GM12878 (cell line): ENCODE measurements at regions of chr6 and their contacts with region 1.

Region 1: DNA sequence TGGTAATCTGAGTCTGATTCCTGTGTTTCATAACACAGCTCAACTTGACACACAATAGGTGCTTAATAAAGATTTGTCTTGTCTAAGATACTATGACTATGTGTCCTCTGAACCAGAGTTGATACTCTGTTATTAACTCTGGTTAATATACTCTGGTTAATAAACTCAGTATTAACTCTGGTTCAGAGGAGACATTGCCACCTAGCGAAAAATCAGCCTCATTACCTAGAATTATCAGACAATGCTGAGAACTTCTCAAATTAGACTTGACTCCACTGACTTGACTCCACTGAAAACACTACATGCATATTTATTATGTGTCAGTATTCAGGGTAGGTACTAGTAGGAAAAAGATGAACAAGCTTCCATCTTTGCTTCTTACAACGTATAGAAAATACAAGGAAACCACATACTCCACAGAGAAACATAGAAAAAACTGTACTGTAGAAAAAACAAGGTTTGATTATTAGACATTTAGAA is 73.9 kb downstream of the AHI1 start:
- DNase-seq: peak; percentile 16
- ATAC-seq: peak; percentile 97
- H3K4me3 ChIP-seq: no peak overlapping the region
- H3K27ac ChIP-seq: no peak overlapping the region
- H3K4me1 ChIP-seq: peaks cover 4% of the 10 kb centered on the region; the same call in 1 of the 2 replicates
- H3K27me3 ChIP-seq: no peaks in the 10 kb centered on the region
- CTCF ChIP-seq: peak; percentile 61 to 80 (median 68)
- EP300 ChIP-seq: no peak
- POLR2A ChIP-seq: no peak
- RAD21 ChIP-seq: peak; percentile 88

Region 2: DNA sequence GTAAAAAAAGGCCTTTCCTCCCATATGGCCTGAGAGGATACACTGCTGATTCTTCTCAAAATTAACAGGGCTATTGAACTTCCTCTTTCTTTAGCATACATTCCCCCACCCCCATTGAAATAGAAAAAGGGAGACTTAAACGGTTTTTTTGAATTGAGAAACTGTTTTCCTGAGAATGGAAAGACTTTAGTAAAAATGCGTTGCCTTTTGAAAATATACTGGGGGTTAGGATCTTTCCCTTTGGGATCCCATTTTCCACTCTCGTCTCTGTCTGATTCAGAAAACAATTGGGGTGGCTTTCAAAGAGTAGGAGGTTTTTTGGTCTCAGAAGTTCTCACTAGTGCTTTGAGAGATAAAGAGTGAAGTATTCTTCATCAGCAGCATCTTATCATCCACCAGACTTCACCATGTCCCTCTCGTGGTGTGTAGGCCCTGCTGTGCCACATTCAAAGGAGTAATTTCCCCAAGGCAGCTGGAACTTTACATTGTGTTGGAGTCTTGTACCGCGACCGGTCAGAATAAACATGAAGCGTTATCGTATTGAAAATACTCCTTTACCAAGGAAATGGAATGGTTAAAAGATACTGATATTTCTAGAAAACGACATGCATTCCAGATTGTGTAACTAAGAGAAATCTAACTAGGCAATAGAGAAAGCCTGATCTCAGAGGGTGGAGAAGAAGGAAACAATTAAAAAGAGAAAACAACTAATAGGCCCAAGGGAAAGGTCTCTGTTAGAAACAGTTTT is 232.0 kb before region 1 on chr6:
- CTCF ChIA-PET with region 1: interaction called, 16 read pairs
- POLR2A ChIA-PET with region 1: no interaction called
- RAD21 ChIA-PET with region 1: interaction called, 6 read pairs
- SMC1A ChIA-PET with region 1: interaction called, 10 read pairs
- in situ Hi-C with region 1: no loop called
- intact Hi-C with region 1: no loop called
- DNase-seq: no peak
- ATAC-seq: peak; percentile 78
- H3K4me3 ChIP-seq: no peak overlapping the region
- H3K27ac ChIP-seq: peak overlapping the region; percentile 56
- H3K4me1 ChIP-seq: peaks cover 9% of the 10 kb centered on the region; the same call in 1 of the 2 replicates
- H3K27me3 ChIP-seq: no peaks in the 10 kb centered on the region
- CTCF ChIP-seq: no peak
- EP300 ChIP-seq: no peak
- POLR2A ChIP-seq: no peak
- RAD21 ChIP-seq: no peak

Region 3: GRCh38 chr6:135226537-135226936 is 197.2 kb before region 1 on chr6:
- CTCF ChIA-PET with region 1: interaction called, 7 read pairs
- POLR2A ChIA-PET with region 1: no interaction called
- RAD21 ChIA-PET with region 1: no interaction called
- SMC1A ChIA-PET with region 1: interaction called, 3 read pairs
- in situ Hi-C with region 1: loop called (anchors 25 kb)
- intact Hi-C with region 1: loop called (anchors 5 kb)
- DNase-seq: peak; percentile 66
- ATAC-seq: peak; percentile 83
- H3K4me3 ChIP-seq: no peak overlapping the region
- H3K27ac ChIP-seq: no peak overlapping the region
- H3K4me1 ChIP-seq: peaks cover 26% of the 10 kb centered on the region
- H3K27me3 ChIP-seq: no peaks in the 10 kb centered on the region
- CTCF ChIP-seq: no peak
- EP300 ChIP-seq: peak; percentile 76 to 79; a peak in 3 of 4 replicates
- POLR2A ChIP-seq: no peak
- RAD21 ChIP-seq: 0 out of 2 replicates have a peak, but pooled peaks have one; percentile 4

Region 4: DNA sequence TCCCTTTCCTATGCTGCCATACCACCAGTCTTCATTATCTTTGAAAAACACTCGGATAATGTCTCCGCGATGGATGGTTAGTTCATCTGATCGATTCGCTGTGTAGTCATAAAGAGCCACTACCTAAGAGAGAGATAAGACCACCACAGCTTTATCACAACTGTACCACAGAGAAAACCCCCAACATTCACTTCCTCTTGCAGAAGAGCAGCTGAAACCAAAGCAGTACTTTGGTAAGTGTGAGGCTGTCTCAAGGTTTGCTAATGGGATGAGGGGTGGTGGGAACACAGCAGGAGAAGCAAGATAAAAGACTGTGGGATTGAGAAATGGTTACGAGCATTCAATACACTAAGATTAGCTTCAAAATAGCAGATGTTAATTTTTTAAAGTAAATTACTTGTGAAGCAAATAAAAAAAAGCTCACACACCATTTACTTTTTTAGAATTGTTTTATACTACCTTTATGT is 100.5 kb before region 1 on chr6:
- CTCF ChIA-PET with region 1: interaction called, 7 read pairs
- POLR2A ChIA-PET with region 1: no interaction called
- RAD21 ChIA-PET with region 1: interaction called, 12 read pairs
- SMC1A ChIA-PET with region 1: interaction called, 6 read pairs
- in situ Hi-C with region 1: no loop called
- intact Hi-C with region 1: no loop called
- DNase-seq: peak; percentile 72
- ATAC-seq: peak; percentile 96
- H3K4me3 ChIP-seq: peak overlapping the region; percentile 51
- H3K27ac ChIP-seq: peak overlapping the region; percentile 80
- H3K4me1 ChIP-seq: peaks cover 22% of the 10 kb centered on the region
- H3K27me3 ChIP-seq: no peaks in the 10 kb centered on the region
- CTCF ChIP-seq: no peak
- EP300 ChIP-seq: peak; percentile 93 to 97
- POLR2A ChIP-seq: no peak
- RAD21 ChIP-seq: 0 out of 2 replicates have a peak, but pooled peaks have one; percentile 3

Region 5: GRCh38 chr6:135411339-135411738 is 12.3 kb before region 1 on chr6:
- CTCF ChIA-PET with region 1: interaction called, 14 read pairs
- POLR2A ChIA-PET with region 1: no interaction called
- RAD21 ChIA-PET with region 1: interaction called, 3 read pairs
- SMC1A ChIA-PET with region 1: interaction called, 5 read pairs
- in situ Hi-C with region 1: no loop called
- intact Hi-C with region 1: no loop called
- DNase-seq: no peak
- ATAC-seq: no peak
- H3K4me3 ChIP-seq: no peak overlapping the region
- H3K27ac ChIP-seq: no peak overlapping the region
- H3K4me1 ChIP-seq: no peaks in the 10 kb centered on the region
- H3K27me3 ChIP-seq: no peaks in the 10 kb centered on the region
- CTCF ChIP-seq: peak; percentile 20 to 36 (median 24); a peak in 4 of 6 replicates
- EP300 ChIP-seq: no peak
- POLR2A ChIP-seq: no peak
- RAD21 ChIP-seq: peak; percentile 34; the same call in 1 of the 2 replicates